ENCODE measurements at regions of chr4 and their contacts with region 1.

Region 1: DNA sequence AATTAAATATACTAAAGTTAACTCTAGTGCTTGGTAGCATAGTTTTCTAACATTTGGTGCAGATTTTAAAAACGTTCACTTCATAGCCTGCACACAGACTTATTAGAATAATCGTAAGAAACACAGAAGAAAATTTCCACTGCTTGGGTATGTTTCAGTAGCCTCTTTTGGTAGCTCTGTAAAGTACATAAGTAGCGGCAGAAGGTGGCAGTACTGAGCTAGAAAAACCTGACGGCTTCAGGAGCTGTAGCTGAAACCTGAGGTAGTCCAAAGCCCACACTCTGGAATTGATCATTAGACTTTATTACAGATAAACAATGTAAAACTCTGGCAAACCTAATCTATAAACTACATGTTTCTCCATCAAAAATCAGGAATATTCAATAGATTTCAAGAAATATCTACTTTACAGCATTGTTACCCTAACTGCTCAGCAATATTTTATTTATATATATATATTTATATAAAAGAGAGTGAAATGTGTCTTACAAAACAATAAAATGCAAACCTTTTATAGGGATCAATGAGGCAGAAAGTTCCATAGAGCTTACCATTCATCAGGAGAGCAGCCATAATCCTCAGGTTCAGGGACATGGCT is 88.2 kb downstream of the ATP8A1 start:
- DNase-seq: peak; percentile 89
- H3K4me3 Mint-ChIP-seq: no peak overlapping the region
- H3K27ac Mint-ChIP-seq: no peak overlapping the region
- H3K4me1 Mint-ChIP-seq: no peaks in the 10 kb centered on the region
- H3K27me3 Mint-ChIP-seq: no peaks in the 10 kb centered on the region

Region 2: GRCh38 chr4:42750091-42750490 is 181.4 kb after region 1 on chr4:
- intact Hi-C with region 1: loop called (anchors 1 kb)
- DNase-seq: peak; percentile 60
- H3K4me3 Mint-ChIP-seq: no peak overlapping the region
- H3K27ac Mint-ChIP-seq: no peak overlapping the region
- H3K4me1 Mint-ChIP-seq: no peaks in the 10 kb centered on the region
- H3K27me3 Mint-ChIP-seq: no peaks in the 10 kb centered on the region

Region 3: DNA sequence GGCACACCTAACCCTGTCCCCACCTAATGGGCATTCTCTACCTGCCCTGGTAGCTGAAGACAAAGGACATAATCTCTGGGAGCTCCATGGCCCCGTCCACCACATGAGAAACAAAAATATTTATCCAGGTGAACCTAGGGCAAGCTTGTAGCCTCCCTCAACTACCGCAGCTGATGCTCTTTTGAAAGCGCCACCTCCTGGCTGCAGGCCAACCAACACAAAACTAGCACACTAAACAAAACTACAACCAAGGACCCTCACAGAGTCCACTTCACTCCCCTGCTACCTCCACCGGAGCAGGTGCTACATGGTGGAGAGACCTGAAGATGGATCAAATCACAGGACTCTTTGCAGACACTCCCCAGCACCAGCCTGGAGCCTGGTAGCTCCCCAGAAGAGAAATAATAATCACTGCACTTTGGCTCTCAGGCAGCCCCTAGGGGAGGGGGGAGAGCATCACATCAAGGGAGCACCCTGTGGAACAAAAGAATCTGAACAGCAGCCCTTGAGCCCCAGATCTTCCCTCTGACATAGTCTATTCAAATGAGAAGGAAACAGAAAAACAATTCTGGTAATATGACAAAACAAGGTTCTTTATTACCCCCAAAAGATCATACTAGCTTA is 199.5 kb after region 1 on chr4:
- intact Hi-C with region 1: loop called (anchors 1 kb)
- DNase-seq: peak; percentile 63
- H3K4me3 Mint-ChIP-seq: no peak overlapping the region
- H3K27ac Mint-ChIP-seq: no peak overlapping the region
- H3K4me1 Mint-ChIP-seq: no peaks in the 10 kb centered on the region
- H3K27me3 Mint-ChIP-seq: peaks cover 5% of the 10 kb centered on the region

Measured in activated CD4-positive, alpha-beta T cell treated with anti-CD3 and anti-CD28 coated beads, Interleukin-2, amount 10 ng/mL, durations not matched to agents 24 days and 14 days (primary cell).